ENCODE measurements at regions of chr15 and their contacts with region 1.

Region 1: DNA sequence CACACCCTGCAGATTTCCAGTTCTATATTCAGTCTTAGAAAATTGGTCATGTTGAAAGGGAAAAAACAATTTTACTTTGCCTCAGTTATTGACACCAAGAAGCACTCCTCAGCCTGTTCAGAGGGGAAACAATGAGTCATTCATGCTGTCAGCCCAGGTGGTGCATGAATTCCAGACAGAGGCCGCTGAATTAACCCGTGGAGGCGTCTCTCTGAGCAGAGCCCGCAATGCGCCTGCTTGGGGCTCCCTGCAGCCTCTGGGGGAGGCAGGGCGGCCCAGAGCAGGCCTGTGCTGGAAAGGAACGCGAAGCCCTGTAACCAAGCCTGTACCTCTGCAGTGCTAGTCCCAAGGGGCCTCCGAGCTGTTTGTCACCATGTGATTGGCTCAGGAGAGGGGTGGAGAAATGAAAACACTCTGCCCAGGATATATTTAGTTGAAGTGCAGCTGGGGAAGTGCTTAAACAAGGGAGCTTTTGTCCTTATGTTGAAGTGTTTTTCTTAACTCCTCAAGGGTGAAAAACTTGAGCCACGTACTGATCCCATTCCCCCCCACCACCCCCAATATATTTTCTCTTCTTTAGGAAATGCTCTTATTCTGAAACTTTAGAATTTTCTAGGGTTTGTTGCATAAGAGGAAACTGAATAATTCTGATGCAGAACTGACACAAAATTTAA is 68.3 kb upstream of the CHD2 start:
- DNase-seq: peak; percentile 87 to 94 (median 92)
- H3K4me3 ChIP-seq: peak overlapping the region; percentile 29
- H3K27ac ChIP-seq: peak overlapping the region; percentile 62 to 86
- H3K4me1 ChIP-seq: peaks cover 16% of the 10 kb centered on the region
- H3K27me3 ChIP-seq: no peaks in the 10 kb centered on the region
- CTCF ChIP-seq: no peak
- EP300 ChIP-seq: peak; percentile 43
- POLR2A ChIP-seq: peak; percentile 75

Region 2: DNA sequence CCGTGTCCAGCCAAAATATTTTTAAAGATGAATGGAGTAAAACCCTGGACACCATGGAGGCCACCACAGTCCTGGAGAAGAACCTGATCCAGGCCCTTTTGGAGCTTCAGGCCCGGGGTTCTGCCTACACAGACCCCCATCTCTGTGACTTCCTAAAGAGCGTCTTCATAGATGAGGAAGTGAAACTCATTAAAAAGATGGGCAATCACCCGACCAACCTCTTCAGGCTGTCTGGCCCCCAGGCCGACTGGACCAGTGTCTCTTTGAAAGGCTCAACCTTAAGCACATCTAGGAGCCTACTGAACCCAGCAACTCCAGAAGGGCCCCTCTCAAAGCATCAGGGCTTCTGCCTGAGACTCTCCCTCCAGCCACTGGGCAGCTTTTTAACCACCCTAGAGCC is 68.3 kb before region 1 on chr15:
- intact Hi-C with region 1: no loop called
- DNase-seq: no peak
- H3K4me3 ChIP-seq: no peak overlapping the region
- H3K27ac ChIP-seq: no peak overlapping the region
- H3K4me1 ChIP-seq: no peaks in the 10 kb centered on the region
- H3K27me3 ChIP-seq: no peaks in the 10 kb centered on the region
- CTCF ChIP-seq: no peak
- EP300 ChIP-seq: no peak
- POLR2A ChIP-seq: no peak

Region 3: GRCh38 chr15:92881802-92882696 is 50.3 kb after region 1 on chr15:
- intact Hi-C with region 1: loop called in 2 of 4 experiments (anchors 2 to 5 kb)
- DNase-seq: peak; percentile 98 to 100 (median 99)
- H3K4me3 ChIP-seq: peak overlapping the region; percentile 44
- H3K27ac ChIP-seq: peak overlapping the region; percentile 99 to 100
- H3K4me1 ChIP-seq: peaks cover 14% of the 10 kb centered on the region
- H3K27me3 ChIP-seq: no peaks in the 10 kb centered on the region
- CTCF ChIP-seq: peak in 1 of 3 donors; percentile 28
- EP300 ChIP-seq: no peak
- POLR2A ChIP-seq: peak; percentile 97

Region 4: DNA sequence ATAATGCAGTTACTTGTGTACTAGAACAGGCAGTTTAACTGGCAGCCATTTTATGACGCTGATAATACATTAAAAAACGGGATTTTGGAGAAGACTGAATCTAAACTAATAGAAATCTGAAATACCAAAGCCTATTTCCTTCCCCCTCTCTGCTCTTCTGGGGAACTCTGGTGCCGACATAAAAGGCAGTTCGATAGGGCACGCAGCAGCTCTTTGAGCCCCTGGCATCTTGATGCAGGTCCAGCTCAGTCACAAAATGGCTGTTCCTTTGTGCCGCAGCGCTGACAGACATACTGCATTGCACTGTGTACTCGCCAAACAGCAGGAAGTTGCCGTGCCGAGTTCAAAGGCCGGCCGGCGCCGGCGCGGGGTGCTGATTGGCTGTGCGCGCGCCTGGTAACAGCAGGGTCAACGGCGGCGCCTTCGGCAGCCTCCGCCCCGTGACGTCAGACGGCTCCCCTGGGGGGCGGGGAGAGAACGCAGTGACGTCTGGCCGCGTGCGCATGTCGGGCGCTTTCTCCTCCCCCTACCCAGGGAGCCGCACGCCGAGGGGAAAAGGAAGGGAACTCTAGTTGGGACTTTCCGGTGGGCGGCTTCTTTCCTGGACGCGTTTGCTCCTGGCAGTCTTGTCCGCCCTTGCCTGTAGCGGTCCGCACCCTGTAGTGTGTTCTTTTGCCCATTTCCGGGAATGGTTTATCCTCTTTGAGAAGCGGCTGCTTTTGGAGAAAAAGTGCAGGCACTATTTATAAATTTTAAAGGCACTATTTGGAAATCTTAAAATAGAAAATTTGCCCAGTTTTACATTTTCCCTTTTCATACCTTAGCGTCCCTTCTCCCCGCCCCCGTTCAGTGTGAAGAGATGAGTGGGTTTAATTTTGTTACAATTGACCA is 72.4 kb after region 1 on chr15:
- intact Hi-C with region 1: loop called in 1 of 4 experiments (anchors 5 kb)
- DNase-seq: peak; percentile 99 to 100 (median 99)
- H3K4me3 ChIP-seq: peak overlapping the region; percentile 71
- H3K27ac ChIP-seq: peak overlapping the region; percentile 69 to 83
- H3K4me1 ChIP-seq: peaks cover 9% of the 10 kb centered on the region
- H3K27me3 ChIP-seq: no peaks in the 10 kb centered on the region
- CTCF ChIP-seq: peak in 1 of 3 donors; percentile 6
- EP300 ChIP-seq: peak; percentile 97
- POLR2A ChIP-seq: peak; percentile 84

Region 5: GRCh38 chr15:92938387-92938786 is 106.6 kb after region 1 on chr15:
- intact Hi-C with region 1: no loop called
- DNase-seq: no peak
- H3K4me3 ChIP-seq: no peak overlapping the region
- H3K27ac ChIP-seq: no peak overlapping the region
- H3K4me1 ChIP-seq: peaks cover 2% of the 10 kb centered on the region
- H3K27me3 ChIP-seq: no peaks in the 10 kb centered on the region
- CTCF ChIP-seq: no peak
- EP300 ChIP-seq: no peak
- POLR2A ChIP-seq: no peak

Region 6: DNA sequence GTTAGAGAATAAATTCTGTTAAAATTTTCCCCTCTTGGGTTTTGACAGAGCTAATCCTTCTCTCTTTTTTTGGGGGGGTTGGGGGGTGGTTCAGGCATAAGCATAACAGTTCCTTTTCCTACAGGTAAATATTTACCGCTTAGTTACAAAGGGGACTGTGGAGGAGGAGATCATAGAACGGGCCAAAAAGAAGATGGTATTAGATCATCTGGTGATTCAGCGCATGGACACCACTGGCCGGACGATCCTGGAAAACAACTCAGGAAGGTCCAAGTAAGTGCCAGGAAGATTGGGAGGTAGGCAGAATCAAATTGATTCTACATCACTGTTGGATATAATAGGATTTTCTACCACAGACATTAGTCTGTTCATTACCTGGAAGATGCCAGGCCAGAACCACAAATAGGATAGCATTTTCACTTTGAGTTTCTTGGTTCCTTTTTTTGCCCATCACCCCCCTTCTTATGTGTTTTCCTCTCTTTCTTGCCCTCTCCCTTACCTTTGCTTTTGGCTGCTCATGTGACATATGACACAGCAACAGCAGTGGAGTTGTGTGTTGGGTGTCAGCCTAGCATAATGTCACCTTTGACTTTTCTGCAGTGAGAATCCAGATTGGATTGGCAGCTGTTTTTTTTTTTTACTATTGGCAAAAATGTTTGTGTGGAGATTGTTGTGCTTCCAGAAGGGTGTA is 147.4 kb after region 1 on chr15:
- intact Hi-C with region 1: no loop called
- DNase-seq: no peak
- H3K4me3 ChIP-seq: no peak overlapping the region
- H3K27ac ChIP-seq: no peak overlapping the region
- H3K4me1 ChIP-seq: no peaks in the 10 kb centered on the region
- H3K27me3 ChIP-seq: no peaks in the 10 kb centered on the region
- CTCF ChIP-seq: no peak
- EP300 ChIP-seq: no peak
- POLR2A ChIP-seq: no peak

Measured in ovary (tissue), 10 donors.